Sciatic nerve (tissue), 2 donors: ENCODE measurements at regions of chr3 and their contacts with region 1.

Region 1: GRCh38 chr3:137978311-137978710 is 31.7 kb upstream of the CLDN18 start:
- DNase-seq: no peak
- ATAC-seq: no peak

Region 2: GRCh38 chr3:137948400-137949072 is 29.8 kb before region 1 on chr3:
- intact Hi-C with region 1: no loop called
- DNase-seq: no peak
- ATAC-seq: no peak

Region 3: DNA sequence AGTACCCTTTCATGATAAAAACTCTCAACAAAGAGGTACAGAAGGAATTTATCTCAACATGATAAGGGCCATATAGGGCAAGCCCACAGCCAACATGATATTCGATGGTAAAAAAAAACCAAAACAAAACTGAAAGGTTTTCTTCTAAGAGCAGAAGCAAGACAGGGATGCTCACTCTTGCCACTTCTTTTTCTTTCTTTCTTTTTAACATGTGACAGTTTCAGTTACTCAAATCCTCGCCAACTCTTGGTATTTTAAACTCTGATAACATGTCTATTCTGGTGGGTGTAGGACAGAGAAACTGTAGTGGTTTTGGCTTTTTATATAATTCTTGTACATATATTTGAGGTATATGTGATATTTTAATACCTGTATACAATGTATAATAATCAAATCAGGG is 1773.5 kb after region 1 on chr3:
- intact Hi-C with region 1: loop called (anchors 5 kb)
- DNase-seq: no peak
- ATAC-seq: no peak